ENCODE measurements at regions of chr4 and their contacts with region 1.

Region 1: DNA sequence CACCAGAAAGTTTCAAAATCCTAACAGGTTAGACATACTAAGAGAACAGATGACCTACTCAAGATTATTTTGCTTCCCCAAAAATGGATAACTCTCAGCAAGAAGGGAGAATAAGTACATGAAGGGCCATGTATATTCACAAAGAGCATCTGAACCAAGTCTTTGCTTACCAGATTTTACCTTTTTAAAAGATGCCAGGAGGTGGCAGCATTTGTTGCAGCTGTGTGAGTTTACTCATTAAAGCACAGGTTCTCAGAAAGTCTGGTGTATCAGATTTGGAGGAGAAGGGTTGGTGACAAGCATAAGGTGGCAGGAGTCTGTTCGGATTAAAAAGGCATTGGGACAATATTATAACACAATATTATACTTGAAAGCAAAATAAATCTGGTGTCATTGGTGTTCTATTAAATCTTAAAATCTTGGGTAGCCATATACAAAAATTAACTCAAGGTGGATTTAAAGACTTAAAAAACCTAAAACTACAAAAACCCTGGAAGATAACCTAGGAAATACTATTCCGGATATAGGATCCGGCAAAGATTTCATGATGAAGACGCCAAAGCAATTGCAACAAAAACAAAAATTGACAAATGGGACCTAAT is 51.3 kb upstream of the NFKB1 start:
- DNase-seq: peak; percentile 76
- H3K4me3 Mint-ChIP-seq: no peak overlapping the region
- H3K27ac Mint-ChIP-seq: no peak overlapping the region
- H3K4me1 Mint-ChIP-seq: peaks cover 18% of the 10 kb centered on the region
- H3K27me3 Mint-ChIP-seq: no peaks in the 10 kb centered on the region

Region 2: DNA sequence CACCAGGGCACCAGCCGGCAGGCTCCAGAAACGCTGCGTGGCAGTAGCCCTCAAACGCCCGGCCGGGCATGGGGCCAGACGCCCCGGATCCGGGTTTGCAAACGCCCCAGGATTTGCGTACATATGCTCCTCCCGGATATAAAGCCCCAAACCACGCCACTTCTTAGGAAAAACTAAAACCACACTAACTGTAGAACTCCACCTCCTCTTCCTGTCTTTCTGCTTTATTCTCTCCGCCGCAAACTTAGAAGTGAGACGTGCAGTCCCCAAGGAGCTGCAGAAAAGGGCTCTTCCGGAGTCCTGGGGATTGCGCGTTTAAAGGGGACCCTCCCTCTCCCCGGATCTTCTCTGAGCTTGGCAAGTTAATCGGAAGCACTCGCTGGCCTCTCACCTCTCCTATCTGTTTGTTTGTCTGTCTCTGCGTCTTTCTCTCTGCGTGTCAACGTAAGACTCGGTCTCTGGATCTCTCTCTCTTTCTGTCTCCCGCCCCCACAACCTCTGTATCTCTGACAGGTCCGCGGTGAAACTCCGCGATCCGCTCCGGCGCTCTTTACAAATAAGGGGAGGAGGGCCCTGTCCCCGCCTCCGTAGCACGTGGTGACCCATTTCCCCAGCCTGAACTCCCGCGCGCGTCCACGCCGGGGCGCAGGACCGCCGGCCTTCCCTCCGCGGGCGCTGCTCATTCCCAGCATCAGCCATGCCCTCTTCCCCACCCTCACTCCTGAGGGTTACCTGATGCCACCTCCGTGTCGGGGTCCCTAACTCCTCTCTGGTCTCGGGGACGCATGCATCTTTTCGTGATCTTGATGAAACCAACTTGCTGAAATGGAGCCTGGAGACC is 104.7 kb before region 1 on chr4 and contains the start of gene SLC39A8:
- CTCF ChIA-PET with region 1: no interaction called
- intact Hi-C with region 1: no loop called
- DNase-seq: peak; percentile 93
- H3K4me3 Mint-ChIP-seq: peak within 1 kb of the TSS; percentile 83
- H3K27ac Mint-ChIP-seq: peak within 1 kb of the TSS; percentile 93
- H3K4me1 Mint-ChIP-seq: peaks cover 38% of the 10 kb centered on the region
- H3K27me3 Mint-ChIP-seq: no peaks in the 10 kb centered on the region
- total RNA-seq, gene SLC39A8: 28.8 to 29.3 TPM

Region 3: DNA sequence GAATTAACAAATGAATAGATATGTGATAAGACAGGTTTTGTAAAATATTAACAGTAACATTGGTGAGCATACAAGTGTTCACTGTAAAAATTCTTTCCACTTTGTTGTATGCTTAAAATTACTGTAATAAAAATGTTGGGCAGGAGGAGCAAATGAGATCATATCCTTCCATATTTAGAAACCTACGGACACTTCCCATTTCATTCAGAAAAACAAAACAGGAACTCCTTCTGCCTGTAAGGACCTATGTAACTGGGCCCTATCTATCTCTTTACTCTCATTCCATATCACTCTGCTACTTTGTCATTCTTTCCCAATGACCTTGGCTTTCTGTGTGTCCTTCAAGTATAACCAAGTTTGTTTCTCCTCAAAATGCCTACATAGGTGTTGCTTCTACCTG is 50.8 kb before region 1 on chr4:
- CTCF ChIA-PET with region 1: no interaction called
- intact Hi-C with region 1: no loop called
- DNase-seq: no peak
- H3K4me3 Mint-ChIP-seq: no peak overlapping the region
- H3K27ac Mint-ChIP-seq: no peak overlapping the region
- H3K4me1 Mint-ChIP-seq: no peaks in the 10 kb centered on the region
- H3K27me3 Mint-ChIP-seq: no peaks in the 10 kb centered on the region

Region 4: DNA sequence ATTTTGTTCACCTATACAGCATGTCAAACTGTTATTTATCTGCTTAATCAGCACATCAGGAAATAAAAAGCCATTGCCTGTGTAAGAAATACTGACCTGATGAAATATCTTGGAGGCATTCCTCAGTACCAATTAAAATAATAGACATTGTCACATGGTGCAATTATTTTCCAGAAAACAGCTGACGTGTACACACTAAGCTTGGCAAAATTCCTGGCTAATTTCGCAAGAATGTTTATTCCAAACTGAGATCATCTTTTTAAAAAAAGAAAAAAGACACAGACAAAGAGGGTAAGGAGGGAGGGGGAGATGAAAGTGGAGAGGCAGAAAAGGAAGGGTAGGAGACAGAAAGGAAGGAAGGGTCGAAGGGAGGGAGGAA is 10.6 kb before region 1 on chr4:
- CTCF ChIA-PET with region 1: interaction called, 14 read pairs
- intact Hi-C with region 1: no loop called
- DNase-seq: no peak
- H3K4me3 Mint-ChIP-seq: no peak overlapping the region
- H3K27ac Mint-ChIP-seq: no peak overlapping the region
- H3K4me1 Mint-ChIP-seq: no peaks in the 10 kb centered on the region
- H3K27me3 Mint-ChIP-seq: no peaks in the 10 kb centered on the region

Region 5: DNA sequence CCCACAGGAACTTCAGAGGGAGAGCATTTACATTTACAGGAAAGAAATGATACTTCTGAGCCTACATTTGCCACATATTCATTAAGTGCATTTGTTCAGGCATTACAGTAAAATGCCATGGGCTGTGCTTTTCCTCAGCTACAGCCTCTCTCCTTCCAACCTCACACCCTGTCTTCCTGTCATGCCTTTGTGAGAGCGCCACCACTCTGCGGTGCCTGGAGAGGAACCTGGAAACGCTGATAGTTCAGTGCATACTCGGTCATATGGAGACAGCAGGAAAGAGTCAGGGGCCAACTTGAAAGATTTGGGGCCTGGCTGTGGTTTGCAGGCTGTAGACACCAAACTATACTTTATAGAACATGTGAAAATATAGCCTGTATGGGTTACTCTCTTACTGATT is 91.8 kb after region 1 on chr4:
- CTCF ChIA-PET with region 1: no interaction called
- intact Hi-C with region 1: loop called (anchors 1 kb)
- DNase-seq: peak; percentile 67
- H3K4me3 Mint-ChIP-seq: no peak overlapping the region
- H3K27ac Mint-ChIP-seq: no peak overlapping the region
- H3K4me1 Mint-ChIP-seq: peaks cover 57% of the 10 kb centered on the region
- H3K27me3 Mint-ChIP-seq: no peaks in the 10 kb centered on the region

Region 6: GRCh38 chr4:102627831-102628523 is 178.1 kb after region 1 on chr4:
- CTCF ChIA-PET with region 1: interaction called, 10 read pairs
- intact Hi-C with region 1: loop called (anchors 1 kb)
- DNase-seq: peak; percentile 62
- H3K4me3 Mint-ChIP-seq: peak overlapping the region; percentile 22
- H3K27ac Mint-ChIP-seq: peak overlapping the region; percentile 54
- H3K4me1 Mint-ChIP-seq: peaks cover 75% of the 10 kb centered on the region
- H3K27me3 Mint-ChIP-seq: no peaks in the 10 kb centered on the region

Measured in activated naive CD4-positive, alpha-beta T cell treated with anti-CD3 and anti-CD28 coated beads for 36 hours (primary cell).